ENCODE measurements at regions of chr1 and their contacts with region 1.

Region 1: GRCh38 chr1:224894918-224895317 is 34.6 kb upstream of the DNAH14 start:
- DNase-seq: no peak
- H3K4me3 ChIP-seq: no peak overlapping the region
- H3K27ac ChIP-seq: no peak overlapping the region
- H3K4me1 ChIP-seq: no peaks in the 10 kb centered on the region
- H3K27me3 ChIP-seq: no peaks in the 10 kb centered on the region
- CTCF ChIP-seq: peak in 2 of 3 experiments; percentile 60 to 62; a peak in 3 of 4 replicates
- EP300 ChIP-seq: no peak
- POLR2A ChIP-seq: no peak
- RAD21 ChIP-seq: peak; percentile 78 to 80

Region 2: GRCh38 chr1:224632381-224632871 is 262.5 kb before region 1 on chr1:
- CTCF ChIA-PET with region 1: interaction called, 12 read pairs
- POLR2A ChIA-PET with region 1: no interaction called
- DNase-seq: no peak
- H3K4me3 ChIP-seq: no peak overlapping the region
- H3K27ac ChIP-seq: no peak overlapping the region
- H3K4me1 ChIP-seq: peaks cover 0 to 9% (median 5%) of the 10 kb centered on the region in 4 experiments; a peak in 5 of 7 replicates
- H3K27me3 ChIP-seq: no peaks in the 10 kb centered on the region
- CTCF ChIP-seq: no peak
- EP300 ChIP-seq: no peak
- POLR2A ChIP-seq: no peak
- RAD21 ChIP-seq: no peak

Region 3: GRCh38 chr1:224736619-224737352 is 158.1 kb before region 1 on chr1:
- CTCF ChIA-PET with region 1: interaction called, 11 read pairs
- POLR2A ChIA-PET with region 1: no interaction called
- DNase-seq: no peak
- H3K4me3 ChIP-seq: no peak overlapping the region
- H3K27ac ChIP-seq: no peak overlapping the region
- H3K4me1 ChIP-seq: peaks cover 12 to 26% (median 13%) of the 10 kb centered on the region in 4 experiments
- H3K27me3 ChIP-seq: peaks cover 0 to 2% (median 0%) of the 10 kb centered on the region in 4 experiments; a peak in 1 of 7 replicates
- CTCF ChIP-seq: no peak
- EP300 ChIP-seq: no peak
- POLR2A ChIP-seq: no peak
- RAD21 ChIP-seq: no peak

Region 4: DNA sequence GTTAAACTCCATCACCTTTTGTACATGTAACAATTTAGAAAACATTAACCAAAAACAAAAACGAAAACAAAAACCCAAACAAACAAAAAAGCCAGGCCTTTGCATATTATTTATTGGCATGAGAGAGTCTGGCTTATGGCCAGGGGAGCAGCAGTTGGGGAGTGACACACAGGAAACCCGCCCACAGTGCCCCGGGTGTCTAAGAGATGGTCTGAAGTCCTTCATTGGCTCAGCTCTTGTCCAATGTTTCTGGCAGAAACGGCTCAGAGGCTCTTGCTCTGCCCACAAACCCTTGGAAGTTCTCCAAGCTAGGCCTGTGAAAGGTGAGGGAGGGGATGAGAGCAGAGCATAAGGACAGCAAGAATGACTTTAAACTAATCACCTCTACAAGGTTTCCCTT is 147.3 kb before region 1 on chr1:
- CTCF ChIA-PET with region 1: no interaction called
- POLR2A ChIA-PET with region 1: no interaction called
- DNase-seq: no peak
- H3K4me3 ChIP-seq: no peak overlapping the region
- H3K27ac ChIP-seq: no peak overlapping the region
- H3K4me1 ChIP-seq: no peaks in the 10 kb centered on the region
- H3K27me3 ChIP-seq: no peaks in the 10 kb centered on the region
- CTCF ChIP-seq: no peak
- EP300 ChIP-seq: no peak
- POLR2A ChIP-seq: no peak
- RAD21 ChIP-seq: no peak

Region 5: GRCh38 chr1:224825558-224825957 is 69.4 kb before region 1 on chr1:
- CTCF ChIA-PET with region 1: no interaction called
- POLR2A ChIA-PET with region 1: no interaction called
- DNase-seq: no peak
- H3K4me3 ChIP-seq: no peak overlapping the region
- H3K27ac ChIP-seq: no peak overlapping the region
- H3K4me1 ChIP-seq: no peaks in the 10 kb centered on the region
- H3K27me3 ChIP-seq: no peaks in the 10 kb centered on the region
- CTCF ChIP-seq: no peak
- EP300 ChIP-seq: no peak
- POLR2A ChIP-seq: no peak
- RAD21 ChIP-seq: no peak

Region 6: DNA sequence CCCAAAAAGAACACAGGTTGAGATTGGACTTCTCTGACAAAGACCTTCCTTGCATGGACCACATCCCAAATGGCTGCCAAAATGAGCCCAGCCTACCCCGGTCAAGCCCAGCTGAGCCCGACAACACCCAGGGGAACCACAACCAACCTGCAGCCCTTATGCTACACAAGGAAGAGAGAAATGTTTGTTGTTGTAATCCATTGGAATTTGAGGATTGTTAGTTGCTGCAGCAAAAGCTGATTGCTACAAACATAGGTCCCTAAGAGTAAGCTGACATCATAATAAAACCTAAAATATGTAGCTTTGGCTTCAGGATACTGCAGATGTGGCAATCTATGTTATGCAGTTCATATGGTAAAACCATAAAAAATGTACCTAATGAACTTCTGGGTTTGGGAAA is 30.9 kb before region 1 on chr1:
- CTCF ChIA-PET with region 1: interaction called, 12 read pairs
- POLR2A ChIA-PET with region 1: no interaction called
- DNase-seq: no peak
- H3K4me3 ChIP-seq: no peak overlapping the region
- H3K27ac ChIP-seq: no peak overlapping the region
- H3K4me1 ChIP-seq: no peaks in the 10 kb centered on the region
- H3K27me3 ChIP-seq: no peaks in the 10 kb centered on the region
- CTCF ChIP-seq: no peak
- EP300 ChIP-seq: no peak
- POLR2A ChIP-seq: no peak
- RAD21 ChIP-seq: no peak

Region 7: DNA sequence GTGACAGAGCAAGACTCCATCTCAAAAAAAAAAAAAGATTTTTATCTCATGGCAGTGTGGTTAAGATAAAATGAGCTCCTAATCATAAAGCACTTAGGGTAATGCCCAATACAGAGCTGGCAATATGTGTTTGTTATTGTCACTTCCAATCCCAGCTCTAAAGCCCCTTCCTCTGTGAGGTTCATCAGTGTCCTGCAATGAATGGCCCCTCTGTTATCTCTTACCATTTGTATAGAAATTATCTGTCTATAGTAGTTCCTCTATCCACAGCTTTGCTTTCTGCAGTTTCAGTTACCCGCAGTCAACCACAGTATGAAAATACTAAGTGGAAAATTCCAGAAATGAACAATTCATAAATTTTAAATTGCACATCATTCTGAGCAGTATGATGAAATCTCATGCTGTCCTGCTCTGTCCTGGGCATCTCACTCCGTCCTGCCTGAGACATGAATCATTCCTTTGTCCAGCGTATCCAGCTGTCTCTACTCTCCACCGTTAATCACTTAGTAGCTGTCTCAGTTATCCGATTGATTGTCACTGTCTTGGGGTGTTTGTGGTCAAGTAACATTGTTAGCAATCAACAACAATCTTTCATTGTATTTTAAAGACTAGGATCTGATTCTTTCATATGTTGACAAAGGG is 15.6 kb before region 1 on chr1:
- CTCF ChIA-PET with region 1: interaction called, 50 read pairs
- POLR2A ChIA-PET with region 1: interaction called, 3 read pairs
- DNase-seq: no peak
- H3K4me3 ChIP-seq: no peak overlapping the region
- H3K27ac ChIP-seq: no peak overlapping the region
- H3K4me1 ChIP-seq: peaks cover 6 to 24% (median 16%) of the 10 kb centered on the region in 4 experiments; a peak in 5 of 7 replicates
- H3K27me3 ChIP-seq: no peaks in the 10 kb centered on the region
- CTCF ChIP-seq: no peak
- EP300 ChIP-seq: no peak
- POLR2A ChIP-seq: no peak
- RAD21 ChIP-seq: no peak

Region 8: GRCh38 chr1:224906340-224906739 is 11.4 kb after region 1 on chr1:
- CTCF ChIA-PET with region 1: interaction called, 23 read pairs
- POLR2A ChIA-PET with region 1: no interaction called
- DNase-seq: no peak
- H3K4me3 ChIP-seq: no peak overlapping the region
- H3K27ac ChIP-seq: no peak overlapping the region
- H3K4me1 ChIP-seq: no peaks in the 10 kb centered on the region
- H3K27me3 ChIP-seq: no peaks in the 10 kb centered on the region
- CTCF ChIP-seq: no peak
- EP300 ChIP-seq: no peak
- POLR2A ChIP-seq: no peak
- RAD21 ChIP-seq: no peak

Region 9: GRCh38 chr1:224959115-224959514 is 64.2 kb after region 1 on chr1:
- CTCF ChIA-PET with region 1: no interaction called
- POLR2A ChIA-PET with region 1: no interaction called
- DNase-seq: no peak
- H3K4me3 ChIP-seq: no peak overlapping the region
- H3K27ac ChIP-seq: no peak overlapping the region
- H3K4me1 ChIP-seq: no peaks in the 10 kb centered on the region; a peak in 1 of 7 replicates
- H3K27me3 ChIP-seq: no peaks in the 10 kb centered on the region
- CTCF ChIP-seq: no peak
- EP300 ChIP-seq: no peak
- POLR2A ChIP-seq: no peak
- RAD21 ChIP-seq: no peak